Right ventricle myocardium inferior (tissue), 1 donor: ENCODE measurements at regions of chr22 and their contacts with region 1.

Region 1: DNA sequence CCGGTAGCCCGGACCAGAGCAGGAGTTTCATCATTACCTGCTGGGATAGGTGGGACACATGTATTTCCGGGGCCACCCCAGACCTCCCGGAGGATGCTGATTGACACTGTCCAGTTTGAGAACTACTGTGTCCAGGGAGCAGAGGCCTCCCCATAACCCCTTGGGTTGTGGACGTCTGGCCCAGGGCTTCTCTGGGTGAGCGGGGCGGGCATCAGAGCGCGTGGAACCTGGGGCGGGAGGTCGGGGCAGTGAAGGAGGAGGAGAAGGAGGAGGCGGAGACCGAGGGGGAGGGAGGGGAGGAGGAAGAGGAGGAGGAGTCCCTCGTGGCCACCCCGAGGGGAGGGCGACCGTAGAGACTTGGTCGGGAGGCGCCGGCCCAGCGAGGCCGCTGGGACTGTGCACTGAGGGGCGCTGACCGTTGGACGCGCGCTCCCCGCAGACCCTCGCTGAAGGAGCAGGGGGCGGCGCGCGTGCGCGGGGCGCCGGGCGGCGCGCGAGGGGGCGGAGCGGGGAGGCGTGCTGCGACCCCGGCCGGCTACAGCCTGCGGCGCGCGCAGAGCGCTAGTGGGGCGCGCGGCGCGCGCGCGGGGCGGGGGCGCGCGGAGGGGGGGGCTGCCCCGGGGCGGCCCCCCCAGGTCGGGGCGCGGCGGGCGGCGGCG is at the start of gene GRK3:
- DNase-seq: peak; percentile 87
- ATAC-seq: peak; percentile 80
- total RNA-seq, gene GRK3: 4.0 TPM

Region 2: GRCh38 chr22:25172153-25172552 is 392.3 kb before region 1 on chr22:
- intact Hi-C with region 1: no loop called
- DNase-seq: no peak
- ATAC-seq: peak; percentile 54

Region 3: DNA sequence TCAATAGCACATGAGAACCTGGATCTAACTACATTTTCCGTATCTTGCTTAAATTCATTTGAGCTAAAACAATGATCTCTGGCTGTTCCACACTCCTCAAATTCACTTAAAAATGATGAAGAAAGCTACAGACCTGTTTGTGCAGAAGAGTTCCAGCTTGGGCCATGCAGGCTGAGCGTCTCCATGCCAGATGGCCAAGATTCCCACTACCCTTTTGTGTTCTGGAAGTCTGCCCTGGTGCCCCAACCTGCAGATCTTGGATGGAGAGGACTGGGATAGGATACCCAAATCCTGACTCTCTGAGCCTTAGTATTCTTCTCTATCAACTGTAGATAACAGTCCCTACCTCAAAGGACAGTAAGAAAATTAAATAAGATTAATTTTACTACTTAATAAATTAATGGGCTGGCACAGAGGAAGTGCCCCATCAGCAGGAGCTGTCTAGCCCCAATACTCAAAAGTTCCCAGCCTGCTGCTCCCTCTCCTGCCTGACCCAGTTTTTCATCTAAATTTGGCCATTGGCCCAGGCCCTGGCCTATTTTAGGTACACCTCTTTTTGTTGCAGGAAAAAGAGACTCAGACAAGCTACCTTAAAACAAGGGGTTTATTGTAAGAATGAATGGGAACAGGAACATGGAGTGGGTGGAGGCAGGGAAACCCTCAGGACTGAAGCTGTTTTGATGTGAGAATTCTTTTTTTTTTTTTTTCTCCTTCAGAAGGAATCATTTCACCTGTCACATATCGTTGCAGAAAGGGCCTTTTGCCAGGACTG is 81.4 kb before region 1 on chr22:
- intact Hi-C with region 1: loop called (anchors 5 kb)
- DNase-seq: no peak
- ATAC-seq: peak; percentile 54

Region 4: GRCh38 chr22:25536589-25536988 is 27.9 kb before region 1 on chr22:
- intact Hi-C with region 1: no loop called
- DNase-seq: no peak
- ATAC-seq: peak; percentile 90